B cell (primary cell): ENCODE measurements at regions of chr1 and their contacts with region 1.

Region 1: GRCh38 chr1:108643492-108644335 is 17.2 kb downstream of the HENMT1 start:
- DNase-seq: peak; percentile 66
- ATAC-seq: peak; percentile 61
- H3K4me3 ChIP-seq: no peak overlapping the region
- H3K4me3 Mint-ChIP-seq: no peak overlapping the region
- H3K27ac ChIP-seq: no peak overlapping the region
- H3K27ac Mint-ChIP-seq: no peak overlapping the region
- H3K4me1 ChIP-seq: peaks cover 13 to 19% of the 10 kb centered on the region in 2 donors
- H3K4me1 Mint-ChIP-seq: peaks cover 21% of the 10 kb centered on the region
- H3K27me3 ChIP-seq: no peaks in the 10 kb centered on the region
- H3K27me3 Mint-ChIP-seq: no peaks in the 10 kb centered on the region
- CTCF ChIP-seq: peak; percentile 60

Region 2: DNA sequence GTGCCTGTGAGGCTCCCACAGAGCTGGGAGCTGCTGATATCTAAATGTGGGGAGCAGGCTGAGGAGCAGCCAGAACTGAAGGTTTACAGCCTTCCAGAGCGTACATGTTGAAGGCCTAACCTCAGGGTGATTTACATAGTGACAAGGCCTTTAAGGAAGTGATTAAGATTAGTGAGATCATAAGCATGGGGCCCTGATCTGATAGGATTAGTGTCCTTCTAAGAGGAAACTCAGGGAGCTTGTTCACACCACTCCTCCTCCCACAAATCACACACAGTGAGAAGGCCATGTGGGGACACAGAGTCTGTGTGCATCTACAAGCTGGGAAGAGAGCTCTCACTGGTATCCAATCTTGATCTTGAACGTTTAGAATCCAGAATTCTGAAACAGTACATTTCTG is 285.9 kb before region 1 on chr1:
- CTCF ChIA-PET with region 1: no interaction called
- POLR2A ChIA-PET with region 1: no interaction called
- intact Hi-C with region 1: no loop called
- DNase-seq: no peak
- ATAC-seq: no peak
- H3K4me3 ChIP-seq: no peak overlapping the region
- H3K4me3 Mint-ChIP-seq: no peak overlapping the region
- H3K27ac ChIP-seq: no peak overlapping the region
- H3K27ac Mint-ChIP-seq: no peak overlapping the region
- H3K4me1 ChIP-seq: no peaks in the 10 kb centered on the region
- H3K4me1 Mint-ChIP-seq: no peaks in the 10 kb centered on the region
- H3K27me3 ChIP-seq: peaks cover 0 to 2% (median 0%) of the 10 kb centered on the region in 4 experiments
- H3K27me3 Mint-ChIP-seq: peaks cover 23% of the 10 kb centered on the region
- CTCF ChIP-seq: no peak

Region 3: GRCh38 chr1:108512239-108512981 is 131.3 kb before region 1 on chr1:
- CTCF ChIA-PET with region 1: interaction called, 121 read pairs
- POLR2A ChIA-PET with region 1: no interaction called
- intact Hi-C with region 1: no loop called
- DNase-seq: peak; percentile 68
- ATAC-seq: peak; percentile 65
- H3K4me3 ChIP-seq: no peak overlapping the region
- H3K4me3 Mint-ChIP-seq: no peak overlapping the region
- H3K27ac ChIP-seq: no peak overlapping the region
- H3K27ac Mint-ChIP-seq: no peak overlapping the region
- H3K4me1 ChIP-seq: no peaks in the 10 kb centered on the region
- H3K4me1 Mint-ChIP-seq: no peaks in the 10 kb centered on the region
- H3K27me3 ChIP-seq: peaks cover 0 to 6% (median 0%) of the 10 kb centered on the region in 4 experiments
- H3K27me3 Mint-ChIP-seq: peaks cover 8% of the 10 kb centered on the region
- CTCF ChIP-seq: peak; percentile 97

Region 4: GRCh38 chr1:108628666-108629065 is 15.0 kb before region 1 on chr1:
- CTCF ChIA-PET with region 1: interaction called, 13 read pairs
- POLR2A ChIA-PET with region 1: no interaction called
- intact Hi-C with region 1: no loop called
- DNase-seq: no peak
- ATAC-seq: no peak
- H3K4me3 ChIP-seq: no peak overlapping the region
- H3K4me3 Mint-ChIP-seq: no peak overlapping the region
- H3K27ac ChIP-seq: no peak overlapping the region
- H3K27ac Mint-ChIP-seq: no peak overlapping the region
- H3K4me1 ChIP-seq: no peaks in the 10 kb centered on the region
- H3K4me1 Mint-ChIP-seq: no peaks in the 10 kb centered on the region
- H3K27me3 ChIP-seq: no peaks in the 10 kb centered on the region
- H3K27me3 Mint-ChIP-seq: no peaks in the 10 kb centered on the region
- CTCF ChIP-seq: no peak

Region 5: DNA sequence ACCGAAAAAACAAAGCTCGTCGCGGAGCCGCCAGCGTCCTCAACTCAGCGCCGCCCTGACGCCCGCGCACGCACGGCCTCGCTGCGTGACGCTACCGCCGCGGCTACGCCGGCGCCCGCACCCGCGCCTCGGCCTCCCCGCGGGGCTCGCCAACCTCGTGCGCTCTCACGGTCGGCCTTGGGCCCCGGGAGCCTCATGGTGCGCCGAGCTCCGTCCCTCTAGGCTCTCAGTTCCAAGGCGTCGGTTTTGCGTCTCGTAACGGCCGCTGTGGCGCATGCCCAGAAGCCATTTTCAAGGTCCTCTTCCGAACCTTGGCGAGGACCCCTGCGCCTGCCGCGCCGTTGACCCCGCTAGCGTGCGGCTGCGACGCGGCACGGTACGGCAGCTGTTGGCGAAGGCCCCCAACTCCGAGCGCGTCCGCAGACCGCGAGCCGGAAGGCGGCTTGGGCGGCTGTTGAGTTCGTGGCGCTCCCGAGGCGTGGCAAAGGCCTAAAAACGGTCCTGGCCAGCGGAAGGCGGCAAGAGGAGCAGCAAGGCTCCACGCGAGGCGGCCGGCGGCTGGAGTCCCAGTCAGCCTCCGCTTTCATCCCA is 17.4 kb after region 1 on chr1 and contains the start of gene HENMT1:
- CTCF ChIA-PET with region 1: interaction called, 10 read pairs
- POLR2A ChIA-PET with region 1: interaction called, 10 read pairs
- intact Hi-C with region 1: no loop called
- DNase-seq: peak; percentile 94
- ATAC-seq: peak; percentile 84
- H3K4me3 ChIP-seq: peak within 1 kb of the TSS; percentile 2 to 69 (median 59)
- H3K4me3 Mint-ChIP-seq: peak within 1 kb of the TSS; percentile 88
- H3K27ac ChIP-seq: peak within 1 kb of the TSS; percentile 94 to 95
- H3K27ac Mint-ChIP-seq: peak within 1 kb of the TSS; percentile 96
- H3K4me1 ChIP-seq: peaks cover 8 to 10% of the 10 kb centered on the region in 2 donors
- H3K4me1 Mint-ChIP-seq: peaks cover 12% of the 10 kb centered on the region
- H3K27me3 ChIP-seq: no peaks in the 10 kb centered on the region
- H3K27me3 Mint-ChIP-seq: no peaks in the 10 kb centered on the region
- CTCF ChIP-seq: no peak
- total RNA-seq, gene HENMT1: 6.2 and 6.4 TPM in 2 replicates

Region 6: DNA sequence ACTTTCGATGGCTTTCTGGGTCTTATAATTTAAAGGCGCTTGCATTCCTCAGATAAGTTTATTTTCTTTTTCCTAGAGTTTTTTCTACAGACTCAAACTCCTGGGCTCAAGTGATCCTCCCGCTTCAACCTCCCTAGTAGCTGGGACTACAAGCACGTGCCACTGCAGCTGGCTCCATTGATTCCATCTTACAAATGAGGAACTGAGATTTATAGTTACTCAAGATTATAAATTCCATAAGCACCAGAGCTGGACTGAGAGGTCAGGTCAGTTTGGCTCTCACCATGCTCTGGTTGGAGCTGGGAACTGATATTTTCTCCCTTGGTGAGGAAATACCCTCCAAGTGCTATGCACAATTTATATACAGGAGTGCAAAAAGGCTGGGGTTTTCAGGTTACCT is 35.0 kb after region 1 on chr1:
- CTCF ChIA-PET with region 1: no interaction called
- POLR2A ChIA-PET with region 1: no interaction called
- intact Hi-C with region 1: no loop called
- DNase-seq: no peak
- ATAC-seq: no peak
- H3K4me3 ChIP-seq: no peak overlapping the region
- H3K4me3 Mint-ChIP-seq: no peak overlapping the region
- H3K27ac ChIP-seq: no peak overlapping the region
- H3K27ac Mint-ChIP-seq: no peak overlapping the region
- H3K4me1 ChIP-seq: no peaks in the 10 kb centered on the region
- H3K4me1 Mint-ChIP-seq: no peaks in the 10 kb centered on the region
- H3K27me3 ChIP-seq: no peaks in the 10 kb centered on the region
- H3K27me3 Mint-ChIP-seq: peaks cover 21% of the 10 kb centered on the region
- CTCF ChIP-seq: no peak

Region 7: DNA sequence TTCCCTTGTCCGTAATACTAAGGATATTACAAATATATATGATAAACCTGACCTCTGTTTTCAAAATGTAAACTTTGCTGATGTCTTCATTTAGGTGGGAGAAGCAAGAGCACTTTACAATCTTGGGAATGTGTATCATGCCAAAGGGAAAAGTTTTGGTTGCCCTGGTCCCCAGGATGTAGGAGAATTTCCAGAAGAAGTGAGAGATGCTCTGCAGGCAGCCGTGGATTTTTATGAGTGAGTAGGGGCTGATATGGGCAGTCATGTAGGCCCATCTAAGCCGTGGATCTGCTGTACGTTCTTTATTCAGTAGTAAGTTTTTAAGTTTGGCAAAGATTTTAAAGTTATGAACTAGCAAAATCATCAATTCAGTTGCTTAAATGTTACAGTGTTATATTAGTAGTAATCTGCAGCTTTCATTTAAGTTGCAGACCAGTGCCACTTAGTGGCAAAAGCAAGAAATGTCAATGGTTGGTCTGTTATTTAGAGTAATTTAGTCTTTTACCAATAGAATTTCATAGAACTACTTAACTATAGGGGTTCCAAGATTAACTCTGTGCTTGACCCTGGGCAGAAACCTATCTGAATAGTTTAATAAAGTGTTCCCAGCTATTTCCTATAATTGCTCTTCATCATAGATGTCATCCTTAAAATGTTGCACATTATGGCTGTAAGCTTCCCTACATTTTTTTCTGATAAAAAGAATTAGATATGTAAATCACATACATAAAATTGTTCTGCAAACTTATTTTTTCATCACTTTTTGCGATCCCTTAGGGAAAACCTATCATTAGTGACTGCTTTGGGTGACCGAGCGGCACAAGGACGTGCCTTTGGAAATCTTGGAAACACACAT is 254.4 kb after region 1 on chr1:
- CTCF ChIA-PET with region 1: interaction called, 11 read pairs
- POLR2A ChIA-PET with region 1: no interaction called
- intact Hi-C with region 1: no loop called
- DNase-seq: peak; percentile 66
- ATAC-seq: peak; percentile 62
- H3K4me3 ChIP-seq: no peak overlapping the region
- H3K4me3 Mint-ChIP-seq: no peak overlapping the region
- H3K27ac ChIP-seq: no peak overlapping the region
- H3K27ac Mint-ChIP-seq: no peak overlapping the region
- H3K4me1 ChIP-seq: no peaks in the 10 kb centered on the region
- H3K4me1 Mint-ChIP-seq: no peaks in the 10 kb centered on the region
- H3K27me3 ChIP-seq: no peaks in the 10 kb centered on the region
- H3K27me3 Mint-ChIP-seq: no peaks in the 10 kb centered on the region
- CTCF ChIP-seq: peak; percentile 77